H1 (cell line): ENCODE measurements at regions of chr6 and their contacts with region 1.

Region 1: GRCh38 chr6:34414999-34415858 is 10.6 kb downstream of the RPS10 start:
- DNase-seq: no peak
- H3K4me3 ChIP-seq: no peak overlapping the region
- H3K27ac ChIP-seq: no peak overlapping the region
- H3K4me1 ChIP-seq: no peaks in the 10 kb centered on the region
- H3K27me3 ChIP-seq: no peaks in the 10 kb centered on the region
- CTCF ChIP-seq: peak in 2 of 3 experiments; percentile 6 to 20; a peak in 2 of 4 replicates
- EP300 ChIP-seq: no peak
- POLR2A ChIP-seq: peak in 1 of 2 experiments; percentile 36; a peak in 2 of 3 replicates
- RAD21 ChIP-seq: peak; percentile 45 to 54; a peak in 3 of 4 replicates

Region 2: GRCh38 chr6:34082864-34083626 is 332.2 kb before region 1 on chr6:
- CTCF ChIA-PET with region 1: no interaction called
- POLR2A ChIA-PET with region 1: no interaction called
- DNase-seq: no peak
- H3K4me3 ChIP-seq: no peak overlapping the region
- H3K27ac ChIP-seq: no peak overlapping the region
- H3K4me1 ChIP-seq: peaks cover 0 to 10% (median 2%) of the 10 kb centered on the region in 4 experiments; a peak in 3 of 7 replicates
- H3K27me3 ChIP-seq: no peaks in the 10 kb centered on the region
- CTCF ChIP-seq: no peak
- EP300 ChIP-seq: no peak
- POLR2A ChIP-seq: no peak
- RAD21 ChIP-seq: no peak

Region 3: DNA sequence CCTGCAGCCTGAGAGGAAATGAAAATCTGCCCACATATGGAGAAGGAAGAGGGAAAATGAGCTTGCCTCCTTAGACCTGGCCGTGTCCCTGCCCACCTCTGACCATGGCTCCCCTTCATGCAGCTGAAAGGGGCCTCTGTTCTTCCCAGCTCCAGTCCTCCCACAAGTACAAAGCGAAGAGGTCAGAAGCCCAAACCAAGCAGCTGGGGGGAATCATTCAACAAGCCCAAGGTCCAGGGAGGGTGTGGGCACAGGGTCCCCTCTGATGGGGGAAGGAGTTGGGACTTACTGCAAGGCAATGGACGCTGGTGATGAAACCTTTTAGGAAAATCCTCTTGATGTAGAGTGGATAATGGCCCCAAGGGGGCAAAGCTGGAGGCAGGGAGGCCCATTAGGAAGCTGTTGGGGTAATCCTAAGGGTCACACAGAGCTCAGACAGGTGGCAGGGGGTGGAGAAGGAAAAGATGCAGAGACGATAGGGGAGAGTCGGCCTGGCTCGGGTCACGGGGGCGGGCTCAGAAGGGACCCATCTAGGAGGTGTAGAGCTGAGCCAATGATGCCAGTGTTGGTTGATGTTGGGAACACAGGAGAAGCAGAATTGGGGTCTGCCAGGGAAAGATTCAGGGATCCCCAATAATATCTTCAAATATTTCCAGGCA is 253.2 kb before region 1 on chr6:
- CTCF ChIA-PET with region 1: interaction called, 12 read pairs
- POLR2A ChIA-PET with region 1: interaction called, 3 read pairs
- DNase-seq: peak in 1 of 2 experiments; percentile 32
- H3K4me3 ChIP-seq: no peak overlapping the region
- H3K27ac ChIP-seq: no peak overlapping the region
- H3K4me1 ChIP-seq: no peaks in the 10 kb centered on the region
- H3K27me3 ChIP-seq: no peaks in the 10 kb centered on the region
- CTCF ChIP-seq: no peak
- EP300 ChIP-seq: no peak
- POLR2A ChIP-seq: no peak
- RAD21 ChIP-seq: no peak

Region 4: GRCh38 chr6:34196126-34196830 is 219.0 kb before region 1 on chr6:
- CTCF ChIA-PET with region 1: interaction called, 10 read pairs
- POLR2A ChIA-PET with region 1: interaction called, 8 read pairs
- DNase-seq: peak in 1 of 2 experiments; percentile 91
- H3K4me3 ChIP-seq: peak overlapping the region in 2 of 4 experiments; percentile 23 to 34; a peak in 4 of 8 replicates
- H3K27ac ChIP-seq: no peak overlapping the region
- H3K4me1 ChIP-seq: peaks cover 0 to 12% (median 5%) of the 10 kb centered on the region in 4 experiments; a peak in 5 of 7 replicates
- H3K27me3 ChIP-seq: peaks cover 0 to 13% (median 4%) of the 10 kb centered on the region in 4 experiments; a peak in 4 of 7 replicates
- CTCF ChIP-seq: peak; percentile 78 to 85 (median 79)
- EP300 ChIP-seq: peak in 1 of 2 experiments; percentile 28; a peak in 1 of 3 replicates
- POLR2A ChIP-seq: no peak
- RAD21 ChIP-seq: peak; percentile 74 to 76

Region 5: DNA sequence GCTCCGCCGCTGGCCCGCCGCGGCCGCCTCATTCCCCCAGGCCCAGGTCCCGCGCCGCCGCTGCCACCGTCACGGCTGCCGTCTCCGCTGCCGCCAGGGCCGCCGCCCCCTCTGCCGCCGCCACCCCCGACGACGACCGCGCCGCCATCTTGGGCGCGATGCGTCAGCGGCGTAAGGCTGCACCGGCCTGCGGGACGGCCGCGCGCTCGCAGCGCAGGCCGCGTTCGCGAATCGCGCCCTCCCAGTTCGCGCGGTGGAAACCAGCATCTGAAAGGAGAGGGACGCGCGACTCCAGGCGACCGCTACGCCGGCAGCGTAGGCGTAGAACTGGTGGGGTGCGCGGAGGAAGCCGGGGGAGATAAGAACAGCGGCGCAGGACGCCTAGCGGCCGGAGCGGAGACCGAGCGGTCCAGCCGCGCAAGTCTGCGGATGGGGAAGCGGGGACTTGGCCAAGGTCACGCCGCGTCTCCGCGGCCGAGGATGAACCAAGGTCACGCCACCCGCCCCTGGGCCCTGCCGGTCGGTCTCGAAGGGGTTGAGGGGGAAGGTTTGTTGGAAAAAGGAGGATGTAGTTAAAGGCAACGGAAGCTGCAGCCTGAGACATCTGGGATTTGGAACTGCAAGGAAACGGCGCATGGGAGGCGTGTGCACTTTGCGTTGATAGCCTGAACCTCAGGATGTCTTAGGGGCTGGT is 22.6 kb before region 1 on chr6 and contains the start of gene NUDT3:
- CTCF ChIA-PET with region 1: interaction called, 4 read pairs
- POLR2A ChIA-PET with region 1: interaction called, 108 read pairs
- DNase-seq: peak; percentile 80 to 96
- H3K4me3 ChIP-seq: peak within 1 kb of the TSS; percentile 78 to 99 (median 83)
- H3K27ac ChIP-seq: peak within 1 kb of the TSS; percentile 66
- H3K4me1 ChIP-seq: peaks cover 0 to 4% (median 0%) of the 10 kb centered on the region in 4 experiments; a peak in 2 of 7 replicates
- H3K27me3 ChIP-seq: no peaks in the 10 kb centered on the region
- CTCF ChIP-seq: peak; percentile 75 to 85 (median 81)
- EP300 ChIP-seq: no peak
- POLR2A ChIP-seq: peak in 1 of 2 experiments; percentile 14; a peak in 1 of 3 replicates
- RAD21 ChIP-seq: peak; percentile 64 to 75
- total RNA-seq, gene NUDT3: 36.3 and 36.9 TPM in 2 replicates

Region 6: DNA sequence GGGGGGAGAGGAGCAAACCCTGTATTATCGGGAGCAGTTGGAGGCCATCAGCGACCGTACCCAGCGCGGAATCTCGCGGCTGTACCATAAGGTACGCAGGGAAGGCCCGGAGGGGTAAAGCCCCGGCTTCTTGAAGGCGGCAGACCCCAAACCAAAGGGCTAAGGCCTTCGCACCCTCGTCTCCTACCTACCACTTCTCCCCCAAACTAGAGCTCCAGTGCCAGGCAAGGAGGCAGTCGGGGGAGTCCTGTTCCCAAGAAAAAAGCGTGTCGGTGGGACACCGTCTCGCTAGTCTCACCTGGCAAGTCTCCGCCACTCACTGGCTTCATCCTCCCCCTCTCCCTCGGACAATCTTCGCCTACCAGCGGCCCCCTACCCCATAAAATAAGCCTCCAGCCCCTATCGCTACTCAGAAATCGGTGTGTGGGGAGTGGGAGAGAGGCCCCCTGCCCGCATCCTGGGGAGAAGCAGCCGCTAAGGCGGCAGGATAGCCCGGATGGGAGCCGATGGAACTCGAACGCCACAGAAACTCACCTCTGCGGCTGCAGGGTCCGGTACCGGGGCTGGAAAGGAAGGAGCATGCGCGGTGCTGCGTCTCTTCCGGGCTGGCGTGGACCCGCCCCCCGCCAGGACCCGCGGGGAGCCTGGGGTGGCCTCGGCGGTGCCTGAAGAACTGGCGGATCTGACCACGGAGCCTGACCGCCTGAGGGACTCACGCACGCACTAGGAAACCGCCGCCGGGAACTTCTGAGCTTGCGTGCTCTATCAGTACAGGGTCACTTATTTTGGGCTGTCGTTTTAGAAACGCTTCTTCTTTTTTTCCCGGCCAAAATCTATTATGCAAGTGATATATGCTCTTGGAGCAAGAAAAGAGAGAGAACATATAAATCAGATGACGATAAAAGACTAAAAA is 10.5 kb after region 1 on chr6 and contains the start of gene RPS10:
- CTCF ChIA-PET with region 1: interaction called, 5 read pairs
- POLR2A ChIA-PET with region 1: interaction called, 256 read pairs
- DNase-seq: peak; percentile 75 to 97
- H3K4me3 ChIP-seq: peak within 1 kb of the TSS; percentile 91 to 99 (median 95)
- H3K27ac ChIP-seq: peak within 1 kb of the TSS; percentile 92
- H3K4me1 ChIP-seq: peaks cover 0 to 11% (median 4%) of the 10 kb centered on the region in 4 experiments; a peak in 5 of 7 replicates
- H3K27me3 ChIP-seq: no peaks in the 10 kb centered on the region
- CTCF ChIP-seq: no peak
- EP300 ChIP-seq: no peak
- POLR2A ChIP-seq: peak; percentile 93 to 96
- RAD21 ChIP-seq: 0 out of 4 replicates have a peak, but pooled peaks have one; percentile 3 to 16
- total RNA-seq, gene RPS10: 2,408 and 2,434 TPM in 2 replicates